ENCODE measurements at regions of chr3 and their contacts with region 1.

Region 1: GRCh38 chr3:57961828-57962447 is 46.3 kb upstream of the FLNB start:
- DNase-seq: peak in 1 of 2 experiments; percentile 82
- ATAC-seq: peak; percentile 69 to 70; a peak in 5 of 6 replicates
- H3K4me3 ChIP-seq: no peak overlapping the region
- H3K27ac ChIP-seq: peak overlapping the region; percentile 81 to 86
- H3K4me1 ChIP-seq: peaks cover 37% of the 10 kb centered on the region
- CTCF ChIP-seq: peak; percentile 71
- EP300 ChIP-seq: no peak
- POLR2A ChIP-seq: no peak
- RAD21 ChIP-seq: peak; percentile 82 to 87

Region 2: DNA sequence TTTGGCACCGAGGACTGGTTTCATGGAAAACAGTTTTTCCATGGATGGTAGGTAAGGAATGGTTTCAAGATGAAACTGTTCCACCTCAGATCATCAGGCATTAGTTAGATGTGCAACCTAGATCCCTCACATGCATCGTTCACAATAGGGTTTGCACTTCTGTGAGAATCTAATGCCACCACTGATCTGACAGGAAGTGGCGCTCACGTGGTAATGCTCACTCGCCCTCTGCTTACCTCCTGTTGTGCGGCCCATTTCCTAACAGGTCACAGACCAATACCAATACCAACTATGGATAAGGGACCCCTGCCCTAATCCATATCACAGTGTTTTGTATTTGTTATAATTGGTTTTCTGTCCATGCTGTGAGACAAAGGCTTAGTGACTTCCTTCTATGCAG is 146.9 kb before region 1 on chr3:
- CTCF ChIA-PET with region 1: no interaction called
- POLR2A ChIA-PET with region 1: no interaction called
- DNase-seq: no peak
- ATAC-seq: no peak
- H3K4me3 ChIP-seq: no peak overlapping the region
- H3K27ac ChIP-seq: no peak overlapping the region
- H3K4me1 ChIP-seq: peaks cover 17% of the 10 kb centered on the region
- CTCF ChIP-seq: no peak
- EP300 ChIP-seq: no peak
- POLR2A ChIP-seq: no peak
- RAD21 ChIP-seq: no peak

Region 3: DNA sequence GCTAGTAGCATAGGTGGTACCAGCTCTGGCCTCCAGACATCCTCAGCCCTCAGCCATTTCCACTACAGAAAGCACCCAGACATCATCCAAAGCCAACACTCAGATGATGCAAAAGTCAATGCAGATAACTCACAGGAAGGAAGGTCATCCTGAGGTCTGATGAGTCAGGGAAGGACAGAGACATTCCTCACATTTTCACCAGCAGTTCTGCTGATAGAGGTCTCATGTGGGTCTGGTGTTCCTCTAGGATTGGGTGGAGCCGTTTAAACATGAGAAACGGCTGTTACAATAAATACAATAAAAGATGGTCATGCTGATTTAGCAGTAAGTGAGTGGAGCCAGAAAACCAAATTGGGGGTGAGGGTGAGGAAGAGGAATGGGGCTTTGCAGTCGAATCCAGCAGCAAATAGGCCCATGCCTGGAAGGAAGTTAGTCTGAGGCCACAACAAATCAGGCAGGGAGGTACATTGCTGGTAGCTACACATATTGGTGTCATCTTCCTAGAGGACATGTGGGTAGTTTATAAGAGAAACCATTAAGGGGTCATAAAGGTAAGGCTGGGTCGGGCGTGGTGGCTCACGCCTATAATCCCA is 13.0 kb after region 1 on chr3:
- CTCF ChIA-PET with region 1: interaction called, 12 read pairs
- POLR2A ChIA-PET with region 1: interaction called, 3 read pairs
- DNase-seq: peak; percentile 85 to 98
- ATAC-seq: peak; percentile 79 to 81
- H3K4me3 ChIP-seq: no peak overlapping the region
- H3K27ac ChIP-seq: peak overlapping the region; percentile 92 to 98
- H3K4me1 ChIP-seq: peaks cover 91% of the 10 kb centered on the region
- CTCF ChIP-seq: no peak
- EP300 ChIP-seq: peak; percentile 92 to 93; a peak in 4 of 5 replicates
- POLR2A ChIP-seq: no peak
- RAD21 ChIP-seq: peak; percentile 29 to 47; a peak in 2 of 5 replicates

Region 4: GRCh38 chr3:58013973-58014649 is 52.2 kb after region 1 on chr3:
- CTCF ChIA-PET with region 1: interaction called, 22 read pairs
- POLR2A ChIA-PET with region 1: interaction called, 3 read pairs
- DNase-seq: no peak
- ATAC-seq: peak in 1 of 2 experiments; percentile 10; a peak in 3 of 6 replicates
- H3K4me3 ChIP-seq: peak overlapping the region; percentile 99
- H3K27ac ChIP-seq: peak overlapping the region; percentile 84 to 97
- H3K4me1 ChIP-seq: peaks cover 70% of the 10 kb centered on the region
- CTCF ChIP-seq: no peak
- EP300 ChIP-seq: no peak
- POLR2A ChIP-seq: no peak
- RAD21 ChIP-seq: no peak

Region 5: DNA sequence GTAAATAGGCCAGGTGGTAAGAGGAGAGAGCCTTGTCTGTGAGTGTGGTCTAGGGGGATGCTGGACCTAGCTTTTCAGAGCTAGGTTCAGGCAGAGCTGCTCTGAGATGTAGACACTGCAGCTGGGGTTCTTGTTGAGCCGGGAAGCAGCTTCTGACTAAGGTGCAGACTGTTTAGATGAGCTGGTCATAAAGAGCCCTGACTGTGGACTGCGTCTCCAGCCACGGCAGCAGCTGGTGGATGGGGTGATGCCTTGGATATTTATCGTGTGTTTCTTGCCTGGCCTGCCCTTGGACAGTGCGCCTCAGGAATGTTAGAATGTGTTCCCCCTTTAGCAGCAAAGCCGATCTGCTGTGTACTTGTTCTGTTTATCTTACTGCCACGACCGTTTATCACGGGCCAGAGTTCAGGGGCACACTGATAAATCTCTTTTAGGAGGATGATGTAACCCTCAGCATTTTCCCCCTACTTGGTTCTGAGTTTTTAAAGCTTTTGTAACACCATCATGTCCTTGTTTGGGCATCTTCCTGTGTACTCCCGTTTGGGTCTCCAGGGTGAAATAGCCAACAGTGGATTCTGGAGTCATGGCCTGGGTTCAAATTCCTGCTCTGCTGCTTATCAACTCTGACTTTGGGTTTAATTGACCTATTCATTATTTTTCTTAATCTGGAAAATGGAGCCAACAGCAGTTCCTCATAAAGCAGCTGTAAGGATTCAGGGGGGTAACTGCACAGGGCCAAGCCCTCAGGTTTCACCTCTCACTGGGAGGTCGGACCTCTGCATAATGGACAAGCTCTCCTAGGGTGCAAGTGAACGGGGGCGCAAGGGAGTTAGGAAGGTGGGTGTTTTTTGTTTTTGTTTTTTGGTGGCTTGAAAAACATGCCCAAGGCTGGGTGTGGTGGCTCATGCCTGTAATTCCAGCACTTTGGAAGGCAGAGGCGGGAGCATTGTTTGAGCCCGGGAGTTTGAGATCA is 97.7 kb after region 1 on chr3:
- CTCF ChIA-PET with region 1: interaction called, 12 read pairs
- POLR2A ChIA-PET with region 1: no interaction called
- DNase-seq: peak in 1 of 2 experiments; percentile 82
- ATAC-seq: peak; percentile 76 to 77; a peak in 5 of 6 replicates
- H3K4me3 ChIP-seq: peak overlapping the region; percentile 23; the same call in 1 of the 3 replicates
- H3K27ac ChIP-seq: peak overlapping the region; percentile 88 to 90
- H3K4me1 ChIP-seq: peaks cover 100% of the 10 kb centered on the region
- CTCF ChIP-seq: no peak
- EP300 ChIP-seq: peak in 1 of 2 experiments; percentile 57; a peak in 2 of 5 replicates
- POLR2A ChIP-seq: no peak
- RAD21 ChIP-seq: no peak